ENCODE measurements at regions of chr16 and their contacts with region 1.

Region 1: GRCh38 chr16:50747207-50747956 is 5.5 kb downstream of the CYLD start:
- DNase-seq: peak in 6 of 10 donors; percentile 20 to 74 (median 55)
- ATAC-seq: peak; percentile 65 to 83
- H3K4me3 Mint-ChIP-seq: peak overlapping the region; percentile 67 to 95 (median 86)
- H3K27ac Mint-ChIP-seq: peak overlapping the region; percentile 57 to 99 (median 96)
- H3K4me1 Mint-ChIP-seq: peaks cover 33 to 85% (median 66%) of the 10 kb centered on the region in 4 donors
- H3K27me3 Mint-ChIP-seq: no peaks in the 10 kb centered on the region

Region 2: GRCh38 chr16:50671644-50672260 is 75.6 kb before region 1 on chr16:
- POLR2A ChIA-PET with region 1: interaction called, 18 read pairs
- DNase-seq: peak in 7 of 10 donors; percentile 10 to 47 (median 41)
- ATAC-seq: no peak
- H3K4me3 Mint-ChIP-seq: no peak overlapping the region
- H3K27ac Mint-ChIP-seq: peak overlapping the region in 7 of 10 donors; percentile 17 to 87 (median 60)
- H3K4me1 Mint-ChIP-seq: peaks cover 17 to 33% (median 28%) of the 10 kb centered on the region in 4 donors
- H3K27me3 Mint-ChIP-seq: no peaks in the 10 kb centered on the region

Region 3: GRCh38 chr16:50681021-50681885 is 66.1 kb before region 1 on chr16 and contains the start of gene SNX20:
- POLR2A ChIA-PET with region 1: interaction called, 15 read pairs
- DNase-seq: peak; percentile 36 to 83 (median 66)
- ATAC-seq: peak; percentile 89 to 92
- H3K4me3 Mint-ChIP-seq: peak within 1 kb of the TSS; percentile 87 to 94 (median 92)
- H3K27ac Mint-ChIP-seq: peak within 1 kb of the TSS; percentile 94 to 98 (median 98)
- H3K4me1 Mint-ChIP-seq: peaks cover 48 to 93% (median 88%) of the 10 kb centered on the region in 4 donors
- H3K27me3 Mint-ChIP-seq: no peaks in the 10 kb centered on the region
- polyA plus RNA-seq, gene SNX20: 31.1 to 50.4 (median 34.4) TPM

Measured in naive thymus-derived CD8-positive, alpha-beta T cell (primary cell).